ENCODE measurements at regions of chr4 and their contacts with region 1.

Region 1: DNA sequence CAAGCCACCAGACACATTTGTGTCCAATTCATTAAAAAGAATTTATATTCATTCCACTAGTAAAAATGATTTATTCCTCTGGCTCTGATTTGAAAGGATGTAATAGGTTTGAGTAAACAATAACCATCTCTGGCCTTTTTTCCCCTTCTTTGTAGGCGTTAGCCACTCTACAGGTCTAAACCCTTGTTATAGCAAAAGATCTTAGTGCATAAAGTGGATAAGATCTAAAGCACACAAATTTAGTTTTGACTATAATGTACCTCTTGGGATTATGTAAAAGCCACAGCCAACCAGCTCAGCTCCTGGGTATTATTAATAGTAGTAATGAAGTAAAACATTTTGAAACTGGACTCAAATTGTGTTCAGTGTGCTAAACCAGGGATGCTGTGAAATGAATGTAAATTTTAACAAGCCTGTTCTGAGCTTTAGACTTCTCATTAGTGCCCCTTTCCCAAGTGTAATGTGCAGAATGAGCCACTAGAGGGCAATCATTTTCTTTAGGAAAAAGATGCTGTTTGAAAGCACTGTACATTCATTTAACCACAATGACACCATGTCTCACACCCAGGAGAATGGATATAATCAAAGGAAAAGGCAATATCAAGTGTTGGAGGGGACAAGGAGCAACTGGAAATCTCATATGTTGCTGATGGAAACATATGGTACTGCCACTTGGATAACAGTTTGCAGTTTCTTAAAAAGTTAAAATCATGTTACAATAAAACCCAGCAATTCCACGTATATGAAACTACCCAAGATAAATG is 69.7 kb downstream of the KLHL8 start:
- DNase-seq: peak; percentile 29
- ATAC-seq: peak; percentile 52
- H3K4me3 Mint-ChIP-seq: no peak overlapping the region
- H3K27ac Mint-ChIP-seq: no peak overlapping the region
- H3K4me1 Mint-ChIP-seq: peaks cover 17% of the 10 kb centered on the region
- H3K27me3 Mint-ChIP-seq: no peaks in the 10 kb centered on the region
- CTCF ChIP-seq: peak; percentile 90

Region 2: DNA sequence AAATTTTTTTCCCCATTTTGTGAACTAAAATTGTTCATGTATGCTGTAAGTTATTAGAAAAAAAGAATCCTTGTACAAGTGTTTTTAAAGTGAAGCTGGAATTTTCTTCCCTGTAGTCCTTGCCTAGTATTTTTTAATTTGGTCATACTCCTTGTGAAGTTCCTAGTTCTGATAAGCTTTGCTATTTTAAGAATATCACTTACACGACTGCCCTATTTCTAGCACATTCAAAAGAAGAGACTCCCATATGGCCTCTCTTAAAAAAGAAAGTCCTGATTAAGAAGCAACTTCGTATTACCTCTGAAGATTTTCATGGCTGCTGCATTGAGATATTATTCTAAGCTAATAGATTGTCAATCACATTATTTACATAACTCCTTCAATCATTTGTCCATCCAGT is 17.5 kb before region 1 on chr4:
- CTCF ChIA-PET with region 1: no interaction called
- POLR2A ChIA-PET with region 1: no interaction called
- DNase-seq: no peak
- ATAC-seq: no peak
- H3K4me3 Mint-ChIP-seq: no peak overlapping the region
- H3K27ac Mint-ChIP-seq: no peak overlapping the region
- H3K4me1 Mint-ChIP-seq: no peaks in the 10 kb centered on the region
- H3K27me3 Mint-ChIP-seq: no peaks in the 10 kb centered on the region; the same call in 1 of the 2 replicates
- CTCF ChIP-seq: no peak

Region 3: DNA sequence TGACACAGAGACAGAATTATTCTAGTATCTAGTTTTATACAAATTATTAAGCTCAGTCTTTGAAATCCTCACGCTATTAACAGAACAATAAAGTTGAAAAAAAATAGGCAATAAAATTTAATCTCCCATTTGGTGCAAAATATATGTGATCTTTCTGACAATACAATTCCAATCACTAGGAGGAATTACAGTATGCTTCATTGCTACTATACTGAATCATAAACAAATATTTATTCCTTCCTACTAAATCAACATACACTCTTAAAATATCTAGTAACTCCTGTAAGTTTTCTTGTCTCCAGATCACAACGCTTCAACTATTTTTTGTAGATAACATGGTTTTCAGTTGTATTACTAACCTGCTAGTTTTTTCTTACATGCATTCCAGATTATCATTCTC is 24.0 kb after region 1 on chr4:
- CTCF ChIA-PET with region 1: no interaction called
- POLR2A ChIA-PET with region 1: no interaction called
- DNase-seq: no peak
- ATAC-seq: no peak
- H3K4me3 Mint-ChIP-seq: no peak overlapping the region
- H3K27ac Mint-ChIP-seq: no peak overlapping the region
- H3K4me1 Mint-ChIP-seq: no peaks in the 10 kb centered on the region
- H3K27me3 Mint-ChIP-seq: no peaks in the 10 kb centered on the region
- CTCF ChIP-seq: no peak

Region 4: GRCh38 chr4:87213421-87214075 is 62.9 kb after region 1 on chr4:
- CTCF ChIA-PET with region 1: interaction called, 12 read pairs
- POLR2A ChIA-PET with region 1: no interaction called
- DNase-seq: no peak
- ATAC-seq: no peak
- H3K4me3 Mint-ChIP-seq: no peak overlapping the region
- H3K27ac Mint-ChIP-seq: no peak overlapping the region
- H3K4me1 Mint-ChIP-seq: no peaks in the 10 kb centered on the region
- H3K27me3 Mint-ChIP-seq: no peaks in the 10 kb centered on the region
- CTCF ChIP-seq: no peak

Region 5: GRCh38 chr4:87220094-87220822 is 69.6 kb after region 1 on chr4 and contains the start of gene KLHL8:
- CTCF ChIA-PET with region 1: interaction called, 16 read pairs
- POLR2A ChIA-PET with region 1: no interaction called
- DNase-seq: peak; percentile 83
- ATAC-seq: peak; percentile 92
- H3K4me3 Mint-ChIP-seq: peak within 1 kb of the TSS; percentile 90
- H3K27ac Mint-ChIP-seq: peak within 1 kb of the TSS; percentile 87
- H3K4me1 Mint-ChIP-seq: peaks cover 7% of the 10 kb centered on the region
- H3K27me3 Mint-ChIP-seq: no peaks in the 10 kb centered on the region
- CTCF ChIP-seq: no peak
- total RNA-seq, gene KLHL8: 6.5 to 7.3 TPM (median 6.8 TPM) in 3 replicates

Region 6: GRCh38 chr4:87235020-87235671 is 84.5 kb after region 1 on chr4:
- CTCF ChIA-PET with region 1: interaction called, 14 read pairs
- POLR2A ChIA-PET with region 1: no interaction called
- DNase-seq: no peak
- ATAC-seq: no peak
- H3K4me3 Mint-ChIP-seq: peak overlapping the region; percentile 58
- H3K27ac Mint-ChIP-seq: no peak overlapping the region
- H3K4me1 Mint-ChIP-seq: no peaks in the 10 kb centered on the region
- H3K27me3 Mint-ChIP-seq: no peaks in the 10 kb centered on the region; the same call in 1 of the 2 replicates
- CTCF ChIP-seq: no peak